GM18951 (cell line): ENCODE measurements at regions of chr11 and their contacts with region 1.

Region 1: DNA sequence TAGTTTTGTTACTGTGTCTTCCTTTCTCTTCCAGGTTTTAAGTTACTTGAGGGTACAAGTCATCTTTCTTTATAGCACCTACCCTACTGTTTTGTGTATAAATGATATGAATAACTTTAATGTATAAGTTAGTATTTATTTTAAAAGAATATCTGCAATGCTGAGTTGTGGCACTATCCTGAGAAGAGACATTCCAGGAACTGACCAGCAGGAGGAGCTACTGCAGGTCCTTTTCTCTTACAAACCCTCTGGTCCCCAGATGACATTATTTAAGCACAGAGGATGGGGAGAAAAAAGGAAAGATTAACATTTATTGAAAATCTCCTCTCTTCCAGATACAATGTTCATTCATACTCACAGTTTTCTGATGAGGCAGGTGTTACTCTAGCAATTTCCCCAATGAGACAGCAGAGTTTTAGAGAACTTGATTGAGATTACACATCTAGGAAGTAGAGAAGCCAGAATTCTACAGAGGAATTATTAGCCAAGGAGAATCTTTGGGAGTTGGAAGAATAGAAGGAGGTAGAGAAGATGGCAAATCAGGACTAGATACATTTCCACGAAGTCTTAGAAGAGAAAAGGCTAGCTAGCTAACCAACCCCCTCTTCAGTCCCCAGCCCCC is 541.2 kb upstream of the API5 start:
- POLR2A ChIP-seq: no peak

Region 2: GRCh38 chr11:43130616-43131015 is 360.1 kb after region 1 on chr11:
- in situ Hi-C with region 1: no loop called
- POLR2A ChIP-seq: no peak

Region 3: DNA sequence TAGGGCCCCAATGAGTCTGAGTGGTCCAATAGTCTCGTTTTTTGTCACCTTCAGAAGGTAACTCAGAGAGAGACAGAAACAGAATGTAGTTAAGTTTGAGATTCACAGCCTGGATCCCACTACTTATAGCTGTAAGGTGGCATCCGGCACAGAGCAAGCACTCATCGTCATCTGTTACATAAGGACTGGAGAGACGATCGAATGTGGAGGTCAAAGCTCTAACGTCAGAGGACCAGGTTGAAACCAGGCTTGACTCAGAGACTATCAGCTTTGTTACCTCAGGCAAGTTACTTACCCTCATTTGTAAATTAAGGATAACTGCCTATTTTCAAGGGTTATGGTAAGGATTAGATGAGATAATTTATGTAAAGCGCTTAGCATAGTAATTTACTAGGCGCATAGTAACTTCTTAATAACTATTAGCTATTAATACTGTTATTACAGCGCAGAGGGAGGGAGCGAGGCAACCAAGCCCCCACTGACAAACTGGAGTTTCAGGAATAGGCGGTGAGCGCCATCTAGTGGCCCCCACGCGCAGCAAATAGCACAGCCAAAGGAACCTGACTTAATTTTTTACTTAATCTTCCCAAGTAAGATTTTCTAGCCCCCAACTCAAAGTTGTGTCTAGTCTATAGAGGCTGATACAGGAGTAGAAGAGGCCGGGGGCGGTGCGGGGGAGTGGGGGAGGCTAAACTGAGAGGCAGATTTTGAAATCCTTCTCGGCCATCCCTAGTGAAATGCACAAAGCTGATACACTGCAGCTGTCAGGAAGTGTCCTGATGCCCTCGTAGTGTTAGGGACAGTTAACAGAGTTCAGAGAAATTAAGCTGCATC is 512.3 kb after region 1 on chr11:
- in situ Hi-C with region 1: loop called (anchors 10 kb)
- POLR2A ChIP-seq: no peak

Region 4: GRCh38 chr11:43419460-43419859 is 648.9 kb after region 1 on chr11:
- in situ Hi-C with region 1: no loop called
- POLR2A ChIP-seq: no peak